ENCODE measurements at regions of chr12 and their contacts with region 1.

Region 1: GRCh38 chr12:125983093-125983783 is 918.0 kb downstream of the AACS start:
- DNase-seq: peak; percentile 44 to 75 (median 74)
- ATAC-seq: peak; percentile 88 to 91
- H3K4me3 ChIP-seq: peak overlapping the region; percentile 46
- H3K27ac ChIP-seq: peak overlapping the region; percentile 34
- H3K4me1 ChIP-seq: no peaks in the 10 kb centered on the region
- H3K27me3 ChIP-seq: no peaks in the 10 kb centered on the region

Region 2: GRCh38 chr12:125533434-125534029 is 449.7 kb before region 1 on chr12:
- intact Hi-C with region 1: loop called in 1 of 4 experiments (anchors 10 kb)
- DNase-seq: peak; percentile 30 to 70 (median 68)
- ATAC-seq: peak; percentile 70 to 72
- H3K4me3 ChIP-seq: no peak overlapping the region
- H3K27ac ChIP-seq: no peak overlapping the region
- H3K4me1 ChIP-seq: no peaks in the 10 kb centered on the region
- H3K27me3 ChIP-seq: no peaks in the 10 kb centered on the region